Activated T-helper 2 cell treated with anti-CD3 and anti-CD28 coated beads, Interferon-gamma antibody, Interleukin-2, Interleukin-4, amounts not matched to agents 10 μg/mL and 5 μg/mL and 100 μg/mL, durations not matched to agents 14 hours and 24 hours and 36 hours (primary cell): ENCODE measurements at regions of chr6 and their contacts with region 1.

Region 1: DNA sequence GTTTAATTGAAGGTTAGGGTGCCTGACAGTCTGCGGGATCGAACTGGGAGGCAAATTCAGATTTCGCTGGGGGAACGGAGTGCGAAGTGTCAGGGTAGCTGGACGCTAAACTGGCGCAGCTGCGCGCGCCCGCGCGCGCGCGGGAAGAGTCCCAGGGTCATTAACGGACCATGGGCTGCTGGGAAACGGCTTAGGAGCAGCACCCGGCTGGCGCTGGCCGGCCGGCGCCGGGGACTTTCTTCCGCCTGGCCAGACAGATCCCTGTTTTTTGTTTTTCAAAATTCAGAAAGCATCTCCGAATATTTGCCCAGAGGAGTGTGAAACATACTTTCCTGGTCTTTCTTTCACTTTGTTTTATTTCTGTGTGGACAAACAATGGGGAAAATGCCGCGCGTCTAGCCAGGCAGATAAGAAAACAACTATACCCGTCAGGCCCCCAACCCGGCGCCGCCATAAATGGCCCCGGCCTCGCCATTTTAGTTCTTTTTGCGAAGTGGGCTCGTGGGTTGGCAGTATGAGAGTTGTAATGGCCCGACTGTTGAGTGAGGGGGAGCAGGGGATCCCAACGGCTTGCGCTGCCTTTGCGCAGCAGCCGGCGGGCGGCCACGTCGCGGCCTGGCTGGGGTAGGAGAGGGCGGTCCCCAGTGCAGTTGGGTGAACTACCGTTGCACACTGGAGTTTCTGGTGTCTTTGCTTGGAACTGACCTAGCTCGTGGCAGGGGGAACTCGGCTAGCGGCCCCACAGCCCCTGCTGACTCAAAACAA is 7.1 kb downstream of the HSPA1B start:
- DNase-seq: peak; percentile 71
- H3K4me3 Mint-ChIP-seq: peak overlapping the region; percentile 87
- H3K27ac Mint-ChIP-seq: peak overlapping the region; percentile 97
- H3K4me1 Mint-ChIP-seq: peaks cover 36% of the 10 kb centered on the region
- H3K27me3 Mint-ChIP-seq: no peaks in the 10 kb centered on the region

Region 2: GRCh38 chr6:31546962-31547726 is 287.5 kb before region 1 on chr6 and contains the start of gene NFKBIL1:
- intact Hi-C with region 1: loop called (anchors 5 kb)
- DNase-seq: peak; percentile 90
- H3K4me3 Mint-ChIP-seq: peak within 1 kb of the TSS; percentile 84
- H3K27ac Mint-ChIP-seq: peak within 1 kb of the TSS; percentile 78
- H3K4me1 Mint-ChIP-seq: peaks cover 28% of the 10 kb centered on the region
- H3K27me3 Mint-ChIP-seq: no peaks in the 10 kb centered on the region
- total RNA-seq, gene NFKBIL1: 15.7 and 17.6 TPM in 2 replicates

Region 3: GRCh38 chr6:31680840-31681671 is 153.6 kb before region 1 on chr6 and contains the start of gene LY6G5C:
- intact Hi-C with region 1: loop called (anchors 5 kb)
- DNase-seq: peak; percentile 58
- H3K4me3 Mint-ChIP-seq: peak within 1 kb of the TSS; percentile 73
- H3K27ac Mint-ChIP-seq: peak within 1 kb of the TSS; percentile 64
- H3K4me1 Mint-ChIP-seq: peaks cover 21% of the 10 kb centered on the region
- H3K27me3 Mint-ChIP-seq: no peaks in the 10 kb centered on the region
- total RNA-seq, gene LY6G5C: 4.6 and 4.8 TPM in 2 replicates

Region 4: GRCh38 chr6:31795616-31796298 is 38.9 kb before region 1 on chr6 and contains the start of gene VARS1:
- intact Hi-C with region 1: loop called (anchors 5 kb)
- DNase-seq: peak; percentile 81
- H3K4me3 Mint-ChIP-seq: peak within 1 kb of the TSS; percentile 93
- H3K27ac Mint-ChIP-seq: peak within 1 kb of the TSS; percentile 98
- H3K4me1 Mint-ChIP-seq: peaks cover 30% of the 10 kb centered on the region
- H3K27me3 Mint-ChIP-seq: no peaks in the 10 kb centered on the region
- total RNA-seq, gene VARS1: 166 and 176 TPM in 2 replicates

Region 5: DNA sequence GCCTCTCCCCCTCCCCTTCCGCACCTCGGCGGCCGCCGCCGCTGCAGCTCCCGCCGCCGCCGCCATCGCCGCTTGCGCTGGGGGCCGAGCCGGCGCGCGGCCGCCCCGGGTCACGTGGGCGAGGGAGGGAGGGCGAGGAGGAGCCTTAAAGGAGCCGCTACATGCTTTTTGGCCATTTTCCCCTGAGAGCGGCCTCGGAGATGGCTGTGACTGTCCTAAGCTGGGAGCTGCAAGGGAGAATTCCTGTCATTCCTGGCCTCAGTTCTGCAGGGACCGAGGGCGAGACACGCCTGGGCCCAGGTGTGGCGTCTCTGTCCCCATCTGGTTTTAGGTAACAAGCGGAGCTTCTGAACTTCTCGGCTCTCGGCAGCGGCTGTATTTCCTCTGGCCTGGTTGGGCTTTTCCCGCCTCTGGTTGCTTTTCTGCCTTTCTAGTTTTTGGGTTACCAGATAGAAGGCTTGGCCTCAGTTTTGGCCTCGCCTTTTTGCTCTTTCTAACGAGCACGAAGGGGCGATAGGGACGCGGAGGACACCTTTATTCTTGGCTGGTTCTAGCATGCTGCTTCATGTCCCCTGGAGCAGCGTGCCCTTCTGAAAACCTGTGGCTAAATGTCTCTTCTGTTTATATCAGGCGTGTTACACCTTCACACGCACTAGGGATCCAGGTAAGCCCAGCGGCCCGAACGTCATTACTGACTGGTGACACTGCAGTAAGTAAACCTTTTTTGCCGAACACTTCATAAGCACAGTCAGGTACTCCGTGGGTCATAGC is 63.2 kb after region 1 on chr6 and contains the start of gene EHMT2:
- intact Hi-C with region 1: loop called (anchors 5 kb)
- DNase-seq: peak; percentile 84
- H3K4me3 Mint-ChIP-seq: peak within 1 kb of the TSS; percentile 98
- H3K27ac Mint-ChIP-seq: peak within 1 kb of the TSS; percentile 92
- H3K4me1 Mint-ChIP-seq: peaks cover 31% of the 10 kb centered on the region
- H3K27me3 Mint-ChIP-seq: no peaks in the 10 kb centered on the region
- total RNA-seq, gene EHMT2: 76.3 and 76.5 TPM in 2 replicates

Region 6: GRCh38 chr6:32843979-32844838 is 1009.6 kb after region 1 on chr6 and contains the start of gene PSMB8:
- intact Hi-C with region 1: loop called (anchors 10 kb)
- DNase-seq: peak; percentile 96
- H3K4me3 Mint-ChIP-seq: peak within 1 kb of the TSS; percentile 99
- H3K27ac Mint-ChIP-seq: peak within 1 kb of the TSS; percentile 98
- H3K4me1 Mint-ChIP-seq: peaks cover 66% of the 10 kb centered on the region
- H3K27me3 Mint-ChIP-seq: no peaks in the 10 kb centered on the region
- total RNA-seq, gene PSMB8: 352 and 368 TPM in 2 replicates